CD14-positive monocyte (primary cell): ENCODE measurements at regions of chr2 and their contacts with region 1.

Region 1: DNA sequence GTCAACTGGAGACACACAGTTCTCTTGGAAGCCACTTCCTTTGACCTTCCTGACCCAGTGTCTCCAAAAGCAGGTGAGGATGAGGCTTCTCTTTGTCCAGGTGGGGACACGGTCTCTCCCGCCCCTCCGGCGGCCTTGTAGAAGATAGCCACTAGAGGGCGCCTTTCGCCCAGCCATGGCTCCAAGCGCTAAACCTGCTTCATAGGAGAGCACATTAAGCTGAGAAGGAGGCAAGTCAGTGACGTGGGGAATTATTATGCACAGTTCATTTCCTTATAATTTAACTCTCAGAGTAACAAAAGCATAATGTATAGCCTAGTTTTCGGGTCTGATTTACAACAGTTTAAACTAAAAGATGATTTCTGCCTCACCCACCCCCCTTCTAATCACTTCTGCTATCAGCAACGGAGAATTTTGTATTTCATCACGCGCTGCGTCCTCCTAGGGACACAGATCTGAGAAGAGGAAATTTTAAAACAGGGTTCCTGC is 208.7 kb downstream of the ICOS start:
- DNase-seq: peak; percentile 44 to 58 (median 55)
- H3K4me3 ChIP-seq: peak overlapping the region; percentile 17 to 72 (median 50)
- H3K4me3 Mint-ChIP-seq: peak overlapping the region; percentile 47 to 85
- H3K27ac ChIP-seq: no peak overlapping the region
- H3K27ac Mint-ChIP-seq: no peak overlapping the region
- H3K4me1 ChIP-seq: peaks cover 5 to 9% of the 10 kb centered on the region in 2 donors
- H3K4me1 Mint-ChIP-seq: peaks cover 8% of the 10 kb centered on the region
- H3K27me3 ChIP-seq: no peaks in the 10 kb centered on the region
- H3K27me3 Mint-ChIP-seq: peaks cover 0 to 5% (median 5%) of the 10 kb centered on the region in 3 donors
- CTCF ChIP-seq: peak; percentile 98

Region 2: GRCh38 chr2:204051476-204051875 is 93.8 kb before region 1 on chr2:
- intact Hi-C with region 1: no loop called
- DNase-seq: no peak
- H3K4me3 ChIP-seq: no peak overlapping the region
- H3K4me3 Mint-ChIP-seq: no peak overlapping the region
- H3K27ac ChIP-seq: no peak overlapping the region
- H3K27ac Mint-ChIP-seq: no peak overlapping the region
- H3K4me1 ChIP-seq: no peaks in the 10 kb centered on the region
- H3K4me1 Mint-ChIP-seq: no peaks in the 10 kb centered on the region
- H3K27me3 ChIP-seq: no peaks in the 10 kb centered on the region
- H3K27me3 Mint-ChIP-seq: peaks cover 2 to 14% (median 9%) of the 10 kb centered on the region in 3 donors
- CTCF ChIP-seq: peak; percentile 14

Region 3: GRCh38 chr2:204260162-204260877 is 115.0 kb after region 1 on chr2:
- intact Hi-C with region 1: no loop called
- DNase-seq: peak; percentile 8 to 37 (median 33)
- H3K4me3 ChIP-seq: no peak overlapping the region
- H3K4me3 Mint-ChIP-seq: no peak overlapping the region
- H3K27ac ChIP-seq: no peak overlapping the region
- H3K27ac Mint-ChIP-seq: no peak overlapping the region
- H3K4me1 ChIP-seq: peaks cover 24 to 27% of the 10 kb centered on the region in 2 donors
- H3K4me1 Mint-ChIP-seq: peaks cover 26% of the 10 kb centered on the region
- H3K27me3 ChIP-seq: peaks cover 0 to 3% of the 10 kb centered on the region in 2 donors
- H3K27me3 Mint-ChIP-seq: peaks cover 10 to 21% (median 16%) of the 10 kb centered on the region in 3 donors
- CTCF ChIP-seq: peak; percentile 80

Region 4: DNA sequence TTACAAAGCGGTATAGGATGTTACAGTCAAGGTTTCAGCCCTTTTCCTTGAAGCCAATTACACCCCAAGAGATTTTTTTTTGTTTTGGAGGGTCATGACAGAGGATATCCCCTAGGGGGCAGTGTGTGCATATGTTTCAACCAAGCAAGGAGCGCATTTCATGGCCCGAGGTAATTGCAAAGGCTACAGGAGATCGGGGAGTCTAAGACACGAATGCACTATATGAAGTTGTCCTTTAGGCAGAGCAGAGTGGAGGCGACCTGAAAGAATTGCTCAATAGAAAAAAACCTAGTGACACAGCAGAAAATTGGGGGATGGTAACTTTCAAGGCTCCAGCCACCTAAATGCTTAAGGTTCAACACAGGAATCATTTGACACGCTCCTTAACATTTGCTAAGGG is 180.2 kb after region 1 on chr2:
- intact Hi-C with region 1: loop called in 1 of 2 experiments (anchors 10 kb)
- DNase-seq: peak; percentile 21 to 43 (median 26)
- H3K4me3 ChIP-seq: no peak overlapping the region
- H3K4me3 Mint-ChIP-seq: no peak overlapping the region
- H3K27ac ChIP-seq: no peak overlapping the region
- H3K27ac Mint-ChIP-seq: no peak overlapping the region
- H3K4me1 ChIP-seq: no peaks in the 10 kb centered on the region
- H3K4me1 Mint-ChIP-seq: peaks cover 4% of the 10 kb centered on the region
- H3K27me3 ChIP-seq: no peaks in the 10 kb centered on the region
- H3K27me3 Mint-ChIP-seq: peaks cover 0 to 4% (median 2%) of the 10 kb centered on the region in 3 donors
- CTCF ChIP-seq: peak; percentile 86

Region 5: GRCh38 chr2:204849892-204850291 is 704.6 kb after region 1 on chr2:
- intact Hi-C with region 1: no loop called
- DNase-seq: no peak
- H3K4me3 ChIP-seq: no peak overlapping the region
- H3K4me3 Mint-ChIP-seq: no peak overlapping the region
- H3K27ac ChIP-seq: no peak overlapping the region
- H3K27ac Mint-ChIP-seq: no peak overlapping the region
- H3K4me1 ChIP-seq: no peaks in the 10 kb centered on the region
- H3K4me1 Mint-ChIP-seq: no peaks in the 10 kb centered on the region
- H3K27me3 ChIP-seq: no peaks in the 10 kb centered on the region
- H3K27me3 Mint-ChIP-seq: no peaks in the 10 kb centered on the region
- CTCF ChIP-seq: no peak